Colonic mucosa (tissue), 4 donors: ENCODE measurements at regions of chr7 and their contacts with region 1.

Region 1: GRCh38 chr7:105759670-105760550 is 116.5 kb downstream of the ATXN7L1 start:
- DNase-seq: peak; percentile 63
- H3K4me3 ChIP-seq: no peak overlapping the region
- H3K27ac ChIP-seq: peak overlapping the region; percentile 12
- H3K4me1 ChIP-seq: no peaks in the 10 kb centered on the region
- H3K27me3 ChIP-seq: no peaks in the 10 kb centered on the region
- CTCF ChIP-seq: peak; percentile 33

Region 2: GRCh38 chr7:105652359-105652993 is 107.4 kb before region 1 on chr7:
- intact Hi-C with region 1: loop called (anchors 5 kb)
- DNase-seq: peak; percentile 82
- H3K4me3 ChIP-seq: no peak overlapping the region
- H3K27ac ChIP-seq: no peak overlapping the region
- H3K4me1 ChIP-seq: peaks cover 4% of the 10 kb centered on the region
- H3K27me3 ChIP-seq: no peaks in the 10 kb centered on the region
- CTCF ChIP-seq: peak; percentile 90

Region 3: DNA sequence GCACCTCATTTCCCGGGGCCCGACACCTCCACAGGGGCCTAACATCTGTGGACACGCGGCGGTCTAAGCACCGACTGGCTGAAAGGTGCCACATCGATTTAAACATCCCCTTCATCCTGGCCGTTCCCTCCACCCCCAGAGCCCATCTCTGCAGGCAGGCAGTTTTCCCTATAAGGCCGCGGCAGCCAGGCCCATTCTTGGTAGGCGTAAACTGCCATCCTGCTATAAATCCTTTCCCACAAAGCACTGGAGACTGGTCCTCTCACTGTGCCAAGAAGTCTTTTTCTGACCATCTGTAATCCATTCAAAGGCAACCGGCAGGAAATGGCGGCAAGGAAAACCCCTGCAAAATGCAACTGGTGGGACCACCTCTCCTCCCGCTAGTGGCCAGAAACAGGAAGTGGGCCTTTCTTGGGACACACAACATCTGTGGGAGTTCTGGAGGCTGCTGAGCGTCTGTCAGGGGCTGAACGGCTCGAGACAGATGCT is 94.1 kb after region 1 on chr7:
- intact Hi-C with region 1: no loop called
- DNase-seq: no peak
- H3K4me3 ChIP-seq: no peak overlapping the region
- H3K27ac ChIP-seq: no peak overlapping the region
- H3K4me1 ChIP-seq: no peaks in the 10 kb centered on the region
- H3K27me3 ChIP-seq: no peaks in the 10 kb centered on the region
- CTCF ChIP-seq: no peak

Region 4: GRCh38 chr7:106009403-106010226 is 249.7 kb after region 1 on chr7:
- intact Hi-C with region 1: loop called (anchors 2 kb)
- DNase-seq: peak; percentile 90
- H3K4me3 ChIP-seq: no peak overlapping the region
- H3K27ac ChIP-seq: no peak overlapping the region
- H3K4me1 ChIP-seq: no peaks in the 10 kb centered on the region
- H3K27me3 ChIP-seq: no peaks in the 10 kb centered on the region
- CTCF ChIP-seq: peak; percentile 99

Region 5: GRCh38 chr7:106041140-106041717 is 281.3 kb after region 1 on chr7:
- intact Hi-C with region 1: loop called (anchors 2 kb)
- DNase-seq: no peak
- H3K4me3 ChIP-seq: no peak overlapping the region
- H3K27ac ChIP-seq: no peak overlapping the region
- H3K4me1 ChIP-seq: no peaks in the 10 kb centered on the region
- H3K27me3 ChIP-seq: no peaks in the 10 kb centered on the region
- CTCF ChIP-seq: peak; percentile 82

Region 6: GRCh38 chr7:106153891-106154449 is 394.1 kb after region 1 on chr7:
- intact Hi-C with region 1: loop called (anchors 10 kb)
- DNase-seq: peak; percentile 81
- H3K4me3 ChIP-seq: no peak overlapping the region
- H3K27ac ChIP-seq: no peak overlapping the region
- H3K4me1 ChIP-seq: no peaks in the 10 kb centered on the region
- H3K27me3 ChIP-seq: no peaks in the 10 kb centered on the region
- CTCF ChIP-seq: peak; percentile 88